ENCODE measurements at regions of chr16 and their contacts with region 1.

Region 1: DNA sequence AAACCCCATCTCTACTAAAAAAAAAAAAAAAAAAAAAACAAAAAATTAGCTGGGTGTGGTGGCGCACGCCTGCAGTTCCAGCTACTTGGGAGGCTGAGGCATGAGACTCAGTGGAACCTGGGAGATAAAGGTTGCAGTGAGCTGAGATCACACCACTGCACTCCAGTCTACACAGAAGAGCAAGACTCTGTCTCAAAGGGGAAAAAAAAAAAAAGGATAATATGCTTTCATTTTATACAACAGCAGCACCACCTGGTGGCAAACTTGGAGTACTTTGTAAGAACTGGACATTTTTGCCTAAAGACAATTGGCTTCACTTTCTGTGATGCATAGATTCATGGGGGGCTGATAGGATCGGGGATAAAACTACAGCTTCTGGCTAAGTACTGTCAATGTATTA is 8.5 kb downstream of the CHTF8 start:
- DNase-seq: peak; percentile 64 to 74
- H3K4me3 ChIP-seq: no peak overlapping the region
- H3K27ac ChIP-seq: no peak overlapping the region
- H3K4me1 ChIP-seq: peaks cover 0 to 6% of the 10 kb centered on the region in 2 donors
- H3K27me3 ChIP-seq: no peaks in the 10 kb centered on the region
- CTCF ChIP-seq: peak; percentile 26 to 93 (median 68)
- POLR2A ChIP-seq: no peak

Region 2: DNA sequence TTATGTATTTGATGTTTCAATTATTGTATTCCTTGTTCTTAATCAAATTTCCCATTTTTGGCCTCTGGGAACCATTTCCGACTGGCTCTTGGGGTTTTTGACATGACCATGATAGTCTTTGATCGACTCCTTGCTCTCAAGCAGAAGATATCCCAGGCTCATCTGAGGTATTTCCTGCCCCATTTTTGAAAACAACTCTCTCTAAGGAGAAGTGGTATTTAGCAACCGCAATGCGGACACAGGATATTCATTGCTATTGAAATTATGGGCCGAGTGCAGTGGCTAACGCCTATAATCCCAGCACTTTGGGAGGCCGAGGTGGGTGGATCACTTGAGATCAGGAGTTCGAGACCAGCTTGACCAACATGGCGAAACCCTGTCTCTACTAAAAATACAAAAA is 275.1 kb before region 1 on chr16:
- intact Hi-C with region 1: loop called (anchors 5 kb)
- DNase-seq: no peak
- H3K4me3 ChIP-seq: no peak overlapping the region
- H3K27ac ChIP-seq: no peak overlapping the region
- H3K4me1 ChIP-seq: peaks cover 0 to 5% of the 10 kb centered on the region in 2 donors
- H3K27me3 ChIP-seq: no peaks in the 10 kb centered on the region
- CTCF ChIP-seq: no peak
- POLR2A ChIP-seq: no peak

Region 3: GRCh38 chr16:68902008-68902968 is 221.6 kb before region 1 on chr16:
- intact Hi-C with region 1: loop called (anchors 5 kb)
- DNase-seq: peak; percentile 62 to 69
- H3K4me3 ChIP-seq: no peak overlapping the region
- H3K27ac ChIP-seq: peak overlapping the region; percentile 18 to 62 (median 54)
- H3K4me1 ChIP-seq: peaks cover 4 to 15% of the 10 kb centered on the region in 2 donors
- H3K27me3 ChIP-seq: no peaks in the 10 kb centered on the region
- CTCF ChIP-seq: peak; percentile 19 to 91 (median 79)
- POLR2A ChIP-seq: no peak

Region 4: GRCh38 chr16:69057400-69058378 is 66.2 kb before region 1 on chr16:
- intact Hi-C with region 1: no loop called
- DNase-seq: no peak
- H3K4me3 ChIP-seq: no peak overlapping the region
- H3K27ac ChIP-seq: peak overlapping the region in 1 of 3 donors; percentile 31
- H3K4me1 ChIP-seq: peaks cover 6 to 12% of the 10 kb centered on the region in 2 donors
- H3K27me3 ChIP-seq: no peaks in the 10 kb centered on the region
- CTCF ChIP-seq: no peak
- POLR2A ChIP-seq: no peak

Measured in thyroid gland (tissue), 4 donors.